ENCODE measurements at regions of chr1 and their contacts with region 1.

Region 1: GRCh38 chr1:168439456-168440375 is 104.1 kb downstream of the XCL2 start:
- DNase-seq: peak; percentile 90
- H3K4me3 Mint-ChIP-seq: peak overlapping the region; percentile 30
- H3K27ac Mint-ChIP-seq: peak overlapping the region; percentile 9
- H3K4me1 Mint-ChIP-seq: peaks cover 58% of the 10 kb centered on the region
- H3K27me3 Mint-ChIP-seq: peaks cover 10% of the 10 kb centered on the region

Region 2: GRCh38 chr1:168234846-168235547 is 204.7 kb before region 1 on chr1:
- CTCF ChIA-PET with region 1: interaction called, 17 read pairs
- DNase-seq: peak; percentile 48
- H3K4me3 Mint-ChIP-seq: no peak overlapping the region
- H3K27ac Mint-ChIP-seq: no peak overlapping the region
- H3K4me1 Mint-ChIP-seq: peaks cover 53% of the 10 kb centered on the region
- H3K27me3 Mint-ChIP-seq: no peaks in the 10 kb centered on the region

Region 3: GRCh38 chr1:168421399-168422004 is 18.2 kb before region 1 on chr1:
- CTCF ChIA-PET with region 1: interaction called, 13 read pairs
- DNase-seq: no peak
- H3K4me3 Mint-ChIP-seq: no peak overlapping the region
- H3K27ac Mint-ChIP-seq: peak overlapping the region; percentile 77
- H3K4me1 Mint-ChIP-seq: peaks cover 24% of the 10 kb centered on the region
- H3K27me3 Mint-ChIP-seq: peaks cover 3% of the 10 kb centered on the region

Region 4: DNA sequence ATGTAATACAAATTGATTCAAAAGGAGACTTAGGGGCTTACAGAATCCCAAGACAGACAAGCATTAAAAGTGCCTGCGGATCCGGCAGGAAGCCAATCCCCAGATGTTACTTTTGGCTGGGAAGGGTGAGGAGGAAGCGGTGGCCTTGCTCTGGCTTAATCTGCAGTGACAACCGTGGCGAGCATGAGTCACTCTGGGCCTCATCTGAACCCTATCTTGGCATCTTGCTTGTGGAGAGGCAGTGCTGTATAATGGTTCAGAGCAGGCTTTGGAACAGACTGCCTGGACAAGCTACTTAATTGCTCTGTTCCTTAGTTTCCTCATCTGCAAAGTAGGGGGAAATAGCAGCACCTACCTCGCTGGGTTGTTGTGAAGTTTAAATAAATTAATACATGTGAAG is 30.0 kb after region 1 on chr1:
- CTCF ChIA-PET with region 1: interaction called, 22 read pairs
- DNase-seq: peak; percentile 44
- H3K4me3 Mint-ChIP-seq: no peak overlapping the region
- H3K27ac Mint-ChIP-seq: peak overlapping the region; percentile 53
- H3K4me1 Mint-ChIP-seq: peaks cover 62% of the 10 kb centered on the region
- H3K27me3 Mint-ChIP-seq: no peaks in the 10 kb centered on the region

Region 5: GRCh38 chr1:168568346-168568745 is 128.6 kb after region 1 on chr1:
- CTCF ChIA-PET with region 1: interaction called, 12 read pairs
- DNase-seq: no peak
- H3K4me3 Mint-ChIP-seq: no peak overlapping the region
- H3K27ac Mint-ChIP-seq: no peak overlapping the region
- H3K4me1 Mint-ChIP-seq: peaks cover 6% of the 10 kb centered on the region
- H3K27me3 Mint-ChIP-seq: peaks cover 14% of the 10 kb centered on the region

Region 6: DNA sequence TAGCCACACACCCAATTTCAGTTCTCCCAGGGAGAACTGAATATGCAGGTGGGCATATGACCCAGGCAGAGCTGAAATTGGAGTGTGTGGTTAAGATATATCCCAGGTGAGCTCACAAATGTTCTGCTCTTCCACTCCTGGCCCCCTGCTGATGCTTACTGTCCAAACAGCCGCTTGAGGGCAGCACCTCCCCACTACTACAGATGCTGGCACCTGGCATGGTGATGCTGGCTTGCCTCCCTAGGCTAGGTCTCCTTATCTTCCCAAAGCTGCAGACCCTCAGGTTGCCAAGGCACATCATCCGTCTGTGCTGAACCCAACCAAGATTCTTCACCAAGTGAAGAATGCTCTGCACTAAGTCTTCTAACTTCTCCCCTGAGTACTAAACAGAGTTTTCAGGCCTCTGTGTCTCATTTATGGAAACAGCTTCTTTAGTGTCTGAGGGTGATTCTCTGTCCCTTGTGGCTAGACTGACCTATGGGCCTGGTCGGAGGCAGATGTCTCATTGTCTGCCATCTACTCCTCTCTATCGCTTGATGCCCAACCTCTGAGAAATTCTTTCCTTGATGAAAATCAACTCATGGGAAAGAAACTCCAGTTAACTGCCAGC is 163.9 kb after region 1 on chr1:
- CTCF ChIA-PET with region 1: interaction called, 42 read pairs
- DNase-seq: peak; percentile 82
- H3K4me3 Mint-ChIP-seq: no peak overlapping the region
- H3K27ac Mint-ChIP-seq: no peak overlapping the region
- H3K4me1 Mint-ChIP-seq: no peaks in the 10 kb centered on the region
- H3K27me3 Mint-ChIP-seq: peaks cover 12% of the 10 kb centered on the region

Region 7: DNA sequence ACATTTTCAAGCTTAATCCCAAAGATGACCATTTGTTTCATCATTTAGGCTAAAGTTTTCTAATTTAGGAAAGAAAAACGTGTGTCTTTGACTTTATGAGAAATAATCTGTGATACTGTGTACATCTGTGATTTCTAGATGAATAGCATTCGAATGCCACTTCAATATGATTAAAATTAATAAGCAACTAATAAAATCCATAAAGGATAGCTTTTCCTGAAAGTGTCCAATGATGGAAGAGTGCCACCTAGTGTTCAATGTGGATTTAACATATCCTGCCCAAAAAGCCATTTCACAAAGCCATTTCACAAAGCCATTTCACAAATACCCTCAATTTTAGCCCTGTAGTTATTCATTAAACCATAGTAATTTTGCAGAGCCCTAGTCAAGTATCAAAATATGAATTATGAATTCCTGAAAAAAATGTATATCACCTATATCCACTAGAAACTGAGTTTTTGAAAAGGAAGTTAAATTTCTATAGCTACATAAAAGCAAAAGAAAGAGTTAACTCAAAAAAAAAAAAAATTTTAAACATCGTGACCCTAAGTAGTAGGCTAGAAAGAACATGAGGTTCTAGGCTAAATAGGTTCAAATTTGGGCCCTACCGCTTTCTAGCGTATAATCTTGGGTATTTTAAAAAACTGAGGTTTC is 908.8 kb after region 1 on chr1:
- CTCF ChIA-PET with region 1: interaction called, 12 read pairs
- DNase-seq: no peak
- H3K4me3 Mint-ChIP-seq: no peak overlapping the region
- H3K27ac Mint-ChIP-seq: no peak overlapping the region
- H3K4me1 Mint-ChIP-seq: peaks cover 2% of the 10 kb centered on the region
- H3K27me3 Mint-ChIP-seq: peaks cover 4% of the 10 kb centered on the region

Measured in activated naive CD4-positive, alpha-beta T cell treated with anti-CD3 and anti-CD28 coated beads, Interleukin-2, amount 10 ng/mL, durations not matched to agents 7 days and 5 days (primary cell).